HepG2 (cell line): ENCODE measurements at regions of chr11 and their contacts with region 1.

Region 1: GRCh38 chr11:76807206-76807875 is 24.2 kb downstream of the TSKU start:
- DNase-seq: peak; percentile 68
- ATAC-seq: peak; percentile 93
- H3K4me3 ChIP-seq: peak overlapping the region in 1 of 3 experiments; percentile 20; a peak in 1 of 6 replicates
- H3K27ac ChIP-seq: no peak overlapping the region
- H3K4me1 ChIP-seq: peaks cover 22% of the 10 kb centered on the region
- H3K27me3 ChIP-seq: peaks cover 6 to 19% of the 10 kb centered on the region in 2 experiments; a peak in 4 of 5 replicates
- CTCF ChIP-seq: peak; percentile 92
- EP300 ChIP-seq: no peak
- POLR2A ChIP-seq: no peak
- RAD21 ChIP-seq: peak; percentile 67

Region 2: GRCh38 chr11:76835928-76836612 is 28.7 kb after region 1 on chr11:
- CTCF ChIA-PET with region 1: interaction called, 3 read pairs
- POLR2A ChIA-PET with region 1: no interaction called
- in situ Hi-C with region 1: no loop called
- intact Hi-C with region 1: loop called (anchors 2 kb)
- DNase-seq: no peak
- ATAC-seq: no peak
- H3K4me3 ChIP-seq: no peak overlapping the region
- H3K27ac ChIP-seq: no peak overlapping the region
- H3K4me1 ChIP-seq: peaks cover 7% of the 10 kb centered on the region; the same call in 1 of the 2 replicates
- H3K27me3 ChIP-seq: peaks cover 3 to 46% of the 10 kb centered on the region in 2 experiments; a peak in 3 of 5 replicates
- CTCF ChIP-seq: no peak
- EP300 ChIP-seq: no peak
- POLR2A ChIP-seq: no peak
- RAD21 ChIP-seq: no peak

Region 3: GRCh38 chr11:76997512-76997911 is 190.2 kb after region 1 on chr11:
- CTCF ChIA-PET with region 1: no interaction called
- POLR2A ChIA-PET with region 1: no interaction called
- in situ Hi-C with region 1: no loop called
- intact Hi-C with region 1: no loop called
- DNase-seq: no peak
- ATAC-seq: no peak
- H3K4me3 ChIP-seq: no peak overlapping the region
- H3K27ac ChIP-seq: no peak overlapping the region
- H3K4me1 ChIP-seq: no peaks in the 10 kb centered on the region
- H3K27me3 ChIP-seq: no peaks in the 10 kb centered on the region
- CTCF ChIP-seq: no peak
- EP300 ChIP-seq: no peak
- POLR2A ChIP-seq: no peak
- RAD21 ChIP-seq: no peak

Region 4: GRCh38 chr11:77091146-77091940 is 284.0 kb after region 1 on chr11:
- CTCF ChIA-PET with region 1: interaction called, 3 read pairs
- POLR2A ChIA-PET with region 1: no interaction called
- in situ Hi-C with region 1: no loop called
- intact Hi-C with region 1: loop called (anchors 10 kb)
- DNase-seq: peak; percentile 60
- ATAC-seq: peak; percentile 62
- H3K4me3 ChIP-seq: no peak overlapping the region
- H3K27ac ChIP-seq: no peak overlapping the region
- H3K4me1 ChIP-seq: peaks cover 38% of the 10 kb centered on the region
- H3K27me3 ChIP-seq: no peaks in the 10 kb centered on the region; a peak in 1 of 5 replicates
- CTCF ChIP-seq: peak; percentile 97
- EP300 ChIP-seq: no peak
- POLR2A ChIP-seq: no peak
- RAD21 ChIP-seq: peak; percentile 94